Activated T-helper 1 cell treated with anti-CD3 and anti-CD28 coated beads, Interleukin-12 subunit alpha, Interleukin-12 subunit beta, Interleukin-2, Interleukin-4 antibody, amounts not matched to agents 30 ng/mL and 10 ng/mL and 1 ng/mL, durations not matched to agents 14 hours and 24 hours and 36 hours (primary cell): ENCODE measurements at regions of chr20 and their contacts with region 1.

Region 1: GRCh38 chr20:24992487-24993205 is at the start of gene APMAP:
- DNase-seq: peak; percentile 95
- H3K4me3 Mint-ChIP-seq: peak within 1 kb of the TSS; percentile 99
- H3K27ac Mint-ChIP-seq: peak within 1 kb of the TSS; percentile 94
- H3K4me1 Mint-ChIP-seq: peaks cover 52% of the 10 kb centered on the region
- H3K27me3 Mint-ChIP-seq: peaks cover 10% of the 10 kb centered on the region
- total RNA-seq, gene APMAP: 57.7 and 58.7 TPM in 2 replicates

Region 2: DNA sequence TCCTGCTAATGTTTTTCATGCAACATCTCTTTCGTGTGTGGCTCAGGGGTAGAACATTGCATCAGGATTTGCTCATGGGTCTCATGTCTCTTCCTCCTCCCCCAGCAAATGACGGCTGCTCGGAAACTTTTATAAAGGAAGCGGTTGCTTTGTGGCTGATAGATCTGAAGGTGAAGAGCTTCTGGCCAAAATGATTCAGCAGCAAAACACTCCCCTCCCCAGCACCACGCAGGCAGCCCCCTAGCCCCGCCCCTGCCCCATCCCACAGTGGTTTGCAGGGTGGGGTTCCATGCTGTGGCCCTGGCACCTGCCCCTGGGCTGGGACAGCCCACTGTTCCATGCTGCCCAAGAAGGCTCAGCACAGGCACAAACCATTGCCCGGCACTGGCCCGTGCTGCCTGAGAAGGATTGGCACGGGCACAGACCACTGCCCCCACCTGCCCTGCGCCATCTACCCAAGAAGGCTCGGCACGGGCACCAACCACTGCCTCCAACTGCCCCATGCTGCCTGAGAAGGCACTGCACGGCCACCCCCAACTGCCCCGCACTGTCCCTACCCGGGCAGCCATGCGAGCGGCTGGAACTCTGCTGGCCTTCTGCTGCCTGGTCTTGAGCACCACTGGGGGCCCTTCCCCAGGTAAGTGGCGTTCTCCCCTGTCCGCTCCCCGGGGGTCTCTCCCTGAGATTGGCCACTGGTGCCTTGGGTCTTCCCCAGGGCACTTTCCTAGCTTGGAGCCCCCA is 43.5 kb before region 1 on chr20 and contains the start of gene CST7:
- intact Hi-C with region 1: loop called (anchors 1 kb)
- DNase-seq: peak; percentile 81
- H3K4me3 Mint-ChIP-seq: peak within 1 kb of the TSS; percentile 90
- H3K27ac Mint-ChIP-seq: peak within 1 kb of the TSS; percentile 99
- H3K4me1 Mint-ChIP-seq: peaks cover 74% of the 10 kb centered on the region
- H3K27me3 Mint-ChIP-seq: no peaks in the 10 kb centered on the region
- total RNA-seq, gene CST7: 127 and 133 TPM in 2 replicates

Region 3: DNA sequence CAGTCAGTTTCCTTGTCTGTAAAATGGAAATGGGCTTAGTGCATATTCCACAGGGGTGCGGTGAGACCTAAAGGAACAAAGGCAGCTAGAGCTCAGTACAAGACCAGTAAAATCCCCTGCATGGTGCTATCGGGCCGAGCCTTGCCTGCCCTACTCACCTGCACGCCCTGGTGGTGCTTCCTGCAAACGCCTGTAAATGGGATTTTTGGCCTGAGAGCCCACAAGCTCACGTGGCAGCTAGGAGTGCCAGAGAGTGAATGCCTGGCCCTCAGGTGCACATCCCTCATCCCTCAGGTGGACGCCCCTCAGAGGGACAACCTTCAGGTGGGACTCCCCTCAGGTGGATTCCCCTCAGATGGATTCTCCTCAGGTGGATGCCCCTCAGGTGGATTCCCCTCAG is 137.3 kb after region 1 on chr20:
- intact Hi-C with region 1: no loop called
- DNase-seq: no peak
- H3K4me3 Mint-ChIP-seq: no peak overlapping the region
- H3K27ac Mint-ChIP-seq: no peak overlapping the region
- H3K4me1 Mint-ChIP-seq: no peaks in the 10 kb centered on the region
- H3K27me3 Mint-ChIP-seq: peaks cover 3% of the 10 kb centered on the region

Region 4: DNA sequence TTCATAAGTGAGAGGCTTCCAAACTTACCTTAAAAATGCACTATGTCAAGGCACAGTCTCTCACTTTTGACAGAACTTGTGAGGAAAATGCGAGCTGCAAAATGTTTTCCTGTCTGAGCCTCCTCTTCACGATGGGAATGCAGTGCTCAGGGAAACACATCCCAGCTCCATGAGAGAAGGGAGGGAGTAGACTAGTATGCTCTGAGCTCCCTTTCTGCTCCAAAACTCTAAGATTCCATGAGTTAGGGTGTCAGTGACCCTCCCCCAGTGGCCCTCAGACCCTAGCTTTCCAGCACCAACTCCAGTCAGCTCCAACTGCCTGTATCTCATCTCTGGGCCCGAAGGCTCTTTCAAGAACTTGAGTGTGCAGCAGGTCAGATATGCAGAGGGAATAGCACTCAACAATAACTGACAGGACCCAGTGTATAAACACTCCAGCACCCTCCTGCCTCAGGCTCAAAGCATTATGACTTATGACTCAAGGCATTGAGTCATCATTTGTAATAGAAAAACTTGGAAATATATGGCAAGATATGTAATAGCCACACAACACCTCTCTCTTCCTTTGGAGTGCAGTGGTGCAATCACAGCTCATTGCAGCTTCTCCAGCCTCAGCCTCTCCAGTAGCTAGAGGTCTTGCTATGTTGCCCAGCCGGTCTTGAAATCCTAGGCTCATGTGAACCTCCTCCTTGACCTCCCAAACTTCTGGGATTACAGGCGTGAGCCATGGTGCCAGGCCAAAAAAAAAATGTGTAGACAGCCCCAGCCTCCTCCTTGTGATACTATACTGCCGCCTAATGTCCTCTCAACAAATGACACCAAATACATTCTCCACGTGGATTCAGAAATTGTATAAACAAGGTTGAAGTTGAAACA is 186.2 kb after region 1 on chr20:
- intact Hi-C with region 1: loop called (anchors 1 kb)
- DNase-seq: no peak
- H3K4me3 Mint-ChIP-seq: no peak overlapping the region
- H3K27ac Mint-ChIP-seq: no peak overlapping the region
- H3K4me1 Mint-ChIP-seq: no peaks in the 10 kb centered on the region
- H3K27me3 Mint-ChIP-seq: peaks cover 30% of the 10 kb centered on the region

Region 5: GRCh38 chr20:25247956-25248785 is 255.5 kb after region 1 on chr20 and contains the start of gene PYGB:
- intact Hi-C with region 1: loop called (anchors 1 kb)
- DNase-seq: peak; percentile 69
- H3K4me3 Mint-ChIP-seq: peak within 1 kb of the TSS; percentile 92
- H3K27ac Mint-ChIP-seq: peak within 1 kb of the TSS; percentile 87
- H3K4me1 Mint-ChIP-seq: peaks cover 43% of the 10 kb centered on the region
- H3K27me3 Mint-ChIP-seq: no peaks in the 10 kb centered on the region
- total RNA-seq, gene PYGB: 36.8 and 38.5 TPM in 2 replicates

Region 6: GRCh38 chr20:25390538-25391528 is 398.2 kb after region 1 on chr20 and contains the start of gene ABHD12:
- intact Hi-C with region 1: loop called (anchors 1 kb)
- DNase-seq: peak; percentile 93
- H3K4me3 Mint-ChIP-seq: peak within 1 kb of the TSS; percentile 90
- H3K27ac Mint-ChIP-seq: peak within 1 kb of the TSS; percentile 88
- H3K4me1 Mint-ChIP-seq: peaks cover 18% of the 10 kb centered on the region
- H3K27me3 Mint-ChIP-seq: peaks cover 6% of the 10 kb centered on the region
- total RNA-seq, gene ABHD12: 37.0 and 37.6 TPM in 2 replicates

Region 7: DNA sequence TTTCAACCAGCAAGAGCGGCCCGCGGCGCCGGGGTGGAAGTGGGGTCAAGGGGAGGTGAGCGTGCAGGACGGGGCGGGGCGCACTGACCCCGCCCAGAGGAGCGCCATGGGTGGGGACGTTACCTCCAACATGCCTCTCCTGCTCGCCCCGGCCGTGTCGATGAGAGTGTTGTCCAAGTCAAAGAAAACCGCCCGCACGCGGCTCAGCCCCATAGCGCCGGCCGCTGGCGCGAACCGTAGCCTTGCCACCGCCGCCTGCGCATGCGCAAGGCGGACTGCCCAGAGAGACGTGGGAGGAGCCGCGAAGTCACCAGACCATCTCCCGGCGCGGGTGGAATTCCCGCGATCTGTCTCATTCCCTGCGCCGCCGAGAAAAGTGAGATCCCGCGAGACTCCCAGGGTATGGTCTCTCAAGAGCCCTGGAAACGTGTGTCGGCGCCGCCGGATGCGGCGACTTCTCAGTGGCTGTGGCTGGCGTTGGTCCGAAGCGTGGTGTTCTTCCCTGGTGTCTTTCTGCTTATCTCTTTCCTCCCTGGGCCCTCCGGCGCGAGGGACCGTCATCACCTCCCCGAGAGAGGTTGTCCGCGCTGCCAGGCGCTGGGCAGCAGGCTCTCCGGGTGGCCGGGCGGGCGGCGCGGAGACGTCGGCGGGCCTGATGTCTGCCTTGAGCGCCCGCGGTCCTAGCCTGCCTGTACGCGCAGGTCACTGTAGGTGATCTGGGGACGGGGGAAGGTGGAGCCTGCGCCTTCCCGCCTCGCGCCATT is 631.3 kb after region 1 on chr20 and contains the start of gene NANP:
- intact Hi-C with region 1: loop called (anchors 5 kb)
- DNase-seq: peak; percentile 85
- H3K4me3 Mint-ChIP-seq: peak within 1 kb of the TSS; percentile 91
- H3K27ac Mint-ChIP-seq: peak within 1 kb of the TSS; percentile 98
- H3K4me1 Mint-ChIP-seq: peaks cover 39% of the 10 kb centered on the region
- H3K27me3 Mint-ChIP-seq: peaks cover 4% of the 10 kb centered on the region
- total RNA-seq, gene NANP: 9.1 and 9.8 TPM in 2 replicates